ENCODE measurements at regions of chr14 and their contacts with region 1.

Region 1: GRCh38 chr14:71320107-71320733 is 413.0 kb downstream of the PCNX1 start:
- DNase-seq: peak; percentile 99
- H3K4me3 Mint-ChIP-seq: peak within 1 kb of the TSS; percentile 92
- H3K27ac Mint-ChIP-seq: peak within 1 kb of the TSS; percentile 91
- H3K4me1 Mint-ChIP-seq: peaks cover 42% of the 10 kb centered on the region
- H3K27me3 Mint-ChIP-seq: no peaks in the 10 kb centered on the region

Region 2: GRCh38 chr14:71221119-71221518 is 99.1 kb before region 1 on chr14:
- intact Hi-C with region 1: loop called (anchors 1 kb)
- DNase-seq: no peak
- H3K4me3 Mint-ChIP-seq: no peak overlapping the region
- H3K27ac Mint-ChIP-seq: no peak overlapping the region
- H3K4me1 Mint-ChIP-seq: peaks cover 24% of the 10 kb centered on the region
- H3K27me3 Mint-ChIP-seq: no peaks in the 10 kb centered on the region

Region 3: DNA sequence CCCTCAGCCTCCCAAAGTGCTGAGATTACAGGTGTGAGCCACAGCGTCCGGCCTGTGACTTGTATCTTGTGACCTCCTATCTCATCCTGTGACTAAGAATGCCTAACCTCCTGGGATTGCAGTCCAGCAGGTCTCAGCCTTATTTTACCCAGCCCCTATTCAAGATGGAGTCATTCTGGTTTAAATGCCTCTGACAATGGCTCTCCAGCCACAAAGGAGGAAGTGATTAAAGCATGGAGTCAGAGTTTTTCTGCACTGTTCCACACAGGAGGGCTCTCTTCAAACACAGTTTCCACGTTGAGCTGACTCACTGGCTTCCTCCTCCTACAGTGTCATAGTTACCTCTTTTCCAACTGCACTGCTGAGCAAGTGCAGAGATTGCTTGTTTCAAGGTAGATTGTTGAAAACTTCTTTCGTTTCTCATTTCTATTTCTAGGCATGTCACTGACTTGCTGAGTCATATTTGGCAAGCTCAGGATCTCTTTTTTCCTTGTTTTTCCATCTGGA is 29.2 kb before region 1 on chr14:
- intact Hi-C with region 1: loop called (anchors 1 kb)
- DNase-seq: no peak
- H3K4me3 Mint-ChIP-seq: no peak overlapping the region
- H3K27ac Mint-ChIP-seq: peak overlapping the region; percentile 73
- H3K4me1 Mint-ChIP-seq: peaks cover 17% of the 10 kb centered on the region
- H3K27me3 Mint-ChIP-seq: peaks cover 4% of the 10 kb centered on the region

Region 4: GRCh38 chr14:71399057-71399487 is 78.9 kb after region 1 on chr14:
- intact Hi-C with region 1: loop called (anchors 2 kb)
- DNase-seq: no peak
- H3K4me3 Mint-ChIP-seq: peak overlapping the region; percentile 37
- H3K27ac Mint-ChIP-seq: peak overlapping the region; percentile 92
- H3K4me1 Mint-ChIP-seq: peaks cover 54% of the 10 kb centered on the region
- H3K27me3 Mint-ChIP-seq: no peaks in the 10 kb centered on the region

Region 5: GRCh38 chr14:71659161-71659560 is 338.9 kb after region 1 on chr14:
- intact Hi-C with region 1: loop called (anchors 2 kb)
- DNase-seq: no peak
- H3K4me3 Mint-ChIP-seq: no peak overlapping the region
- H3K27ac Mint-ChIP-seq: peak overlapping the region; percentile 9
- H3K4me1 Mint-ChIP-seq: peaks cover 33% of the 10 kb centered on the region
- H3K27me3 Mint-ChIP-seq: no peaks in the 10 kb centered on the region

Measured in activated T-helper 2 cell treated with anti-CD3 and anti-CD28 coated beads, Interferon-gamma antibody, Interleukin-2, Interleukin-4, amounts not matched to agents 10 μg/mL and 5 μg/mL and 100 μg/mL, durations not matched to agents 14 hours and 24 hours and 36 hours (primary cell).